Caco-2 (cell line): ENCODE measurements at regions of chr5 and their contacts with region 1.

Region 1: DNA sequence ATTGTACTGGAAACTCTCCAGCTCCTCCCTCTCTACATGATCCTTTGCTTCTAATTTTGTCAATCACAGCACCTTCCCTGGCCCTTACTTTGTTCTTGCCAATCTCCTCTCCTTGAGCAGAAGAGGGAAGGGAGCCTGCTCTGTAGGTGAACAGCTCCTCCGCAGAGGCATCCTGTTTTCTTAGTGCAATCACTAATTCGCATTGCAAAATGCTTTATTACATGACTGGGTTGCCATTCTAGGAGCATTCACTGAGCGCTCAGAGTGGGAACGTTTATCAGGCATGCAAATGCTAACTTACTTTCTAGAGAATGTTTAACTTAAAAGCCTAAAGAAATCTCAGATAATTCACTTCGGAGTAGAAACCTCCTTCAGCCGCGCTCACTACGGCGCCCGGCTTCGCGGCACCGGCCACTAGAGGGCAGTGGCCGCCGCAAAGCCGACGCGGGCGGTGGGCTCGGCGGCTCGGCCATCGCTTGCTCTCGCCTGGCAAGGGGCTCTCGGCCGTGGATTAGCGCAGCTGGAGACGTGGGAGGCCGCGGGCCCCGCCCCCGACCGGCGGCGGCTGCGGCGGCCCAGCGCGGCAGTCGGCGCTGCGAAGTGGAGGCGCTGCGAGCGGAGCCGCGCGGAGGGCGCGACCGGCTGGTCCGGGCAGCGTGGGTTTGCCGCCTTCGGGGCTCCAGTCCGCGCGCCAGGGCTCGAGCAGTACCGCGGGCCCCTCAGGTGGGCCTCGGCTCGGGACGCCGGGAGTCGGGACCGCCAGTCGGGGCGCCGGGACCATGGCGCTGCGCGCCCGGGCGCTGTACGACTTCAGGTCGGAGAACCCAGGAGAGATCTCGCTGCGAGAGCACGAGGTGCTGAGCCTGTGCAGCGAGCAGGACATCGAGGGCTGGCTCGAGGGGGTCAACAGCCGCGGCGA is at the start of gene SNX18:
- DNase-seq: peak; percentile 93 to 95
- H3K4me3 ChIP-seq: peak within 1 kb of the TSS; percentile 95
- H3K4me3 Mint-ChIP-seq: peak within 1 kb of the TSS; percentile 68
- H3K27ac Mint-ChIP-seq: no peak within 1 kb of the TSS
- H3K4me1 ChIP-seq: peaks cover 25% of the 10 kb centered on the region
- H3K4me1 Mint-ChIP-seq: no peaks in the 10 kb centered on the region
- H3K27me3 ChIP-seq: no peaks in the 10 kb centered on the region
- H3K27me3 Mint-ChIP-seq: no peaks in the 10 kb centered on the region
- CTCF ChIP-seq: peak; percentile 93 to 97
- total RNA-seq, gene SNX18: 25.0 and 28.0 TPM in 2 replicates

Region 2: GRCh38 chr5:54243473-54244080 is 273.9 kb before region 1 on chr5:
- CTCF ChIA-PET with region 1: interaction called, 9 read pairs
- POLR2A ChIA-PET with region 1: no interaction called
- intact Hi-C with region 1: loop called (anchors 10 kb)
- DNase-seq: peak in 1 of 2 experiments; percentile 62
- H3K4me3 ChIP-seq: no peak overlapping the region
- H3K4me3 Mint-ChIP-seq: no peak overlapping the region
- H3K27ac Mint-ChIP-seq: no peak overlapping the region
- H3K4me1 ChIP-seq: 0 out of 2 replicates have a peak, but pooled peaks cover 9% of the 10 kb centered on the region
- H3K4me1 Mint-ChIP-seq: peaks cover 10% of the 10 kb centered on the region
- H3K27me3 ChIP-seq: no peaks in the 10 kb centered on the region
- H3K27me3 Mint-ChIP-seq: no peaks in the 10 kb centered on the region
- CTCF ChIP-seq: peak; percentile 78 to 83

Region 3: GRCh38 chr5:54719384-54720283 is 202.2 kb after region 1 on chr5:
- CTCF ChIA-PET with region 1: no interaction called
- POLR2A ChIA-PET with region 1: no interaction called
- intact Hi-C with region 1: no loop called
- DNase-seq: no peak
- H3K4me3 ChIP-seq: no peak overlapping the region
- H3K4me3 Mint-ChIP-seq: no peak overlapping the region
- H3K27ac Mint-ChIP-seq: no peak overlapping the region
- H3K4me1 ChIP-seq: no peaks in the 10 kb centered on the region
- H3K4me1 Mint-ChIP-seq: peaks cover 2% of the 10 kb centered on the region
- H3K27me3 ChIP-seq: no peaks in the 10 kb centered on the region; the same call in 1 of the 2 replicates
- H3K27me3 Mint-ChIP-seq: peaks cover 9% of the 10 kb centered on the region
- CTCF ChIP-seq: no peak

Region 4: DNA sequence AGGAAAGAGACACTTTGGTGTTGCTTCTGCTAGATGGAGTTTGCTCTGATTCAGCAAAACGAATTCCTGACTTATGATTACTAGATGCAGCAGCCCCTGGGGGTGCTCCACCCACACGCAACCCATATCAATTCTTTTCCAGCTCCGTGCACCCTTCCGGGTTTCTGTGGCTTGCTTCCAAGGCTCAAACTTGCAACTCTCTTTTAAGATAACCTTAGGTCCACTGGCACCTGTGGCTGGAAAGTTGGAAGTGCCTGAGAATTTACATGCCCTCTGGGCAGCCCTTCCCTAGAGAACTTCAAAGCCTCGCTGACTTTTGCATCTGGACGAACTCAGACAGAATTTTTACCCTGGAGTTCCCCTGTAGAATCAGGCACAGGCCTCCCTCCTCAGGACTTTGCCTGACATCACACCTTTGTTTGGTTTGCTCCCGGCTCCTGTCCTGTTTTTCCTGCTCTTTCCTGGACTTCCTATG is 225.0 kb after region 1 on chr5:
- CTCF ChIA-PET with region 1: interaction called, 4 read pairs
- POLR2A ChIA-PET with region 1: no interaction called
- intact Hi-C with region 1: loop called (anchors 1 kb)
- DNase-seq: peak; percentile 41 to 75
- H3K4me3 ChIP-seq: no peak overlapping the region
- H3K4me3 Mint-ChIP-seq: no peak overlapping the region
- H3K27ac Mint-ChIP-seq: no peak overlapping the region
- H3K4me1 ChIP-seq: peaks cover 24% of the 10 kb centered on the region
- H3K4me1 Mint-ChIP-seq: no peaks in the 10 kb centered on the region
- H3K27me3 ChIP-seq: no peaks in the 10 kb centered on the region
- H3K27me3 Mint-ChIP-seq: peaks cover 6% of the 10 kb centered on the region
- CTCF ChIP-seq: peak in 1 of 2 experiments; percentile 15

Region 5: GRCh38 chr5:54844905-54845566 is 327.6 kb after region 1 on chr5:
- CTCF ChIA-PET with region 1: interaction called, 22 read pairs
- POLR2A ChIA-PET with region 1: no interaction called
- intact Hi-C with region 1: loop called (anchors 1 kb)
- DNase-seq: peak in 1 of 2 experiments; percentile 18
- H3K4me3 ChIP-seq: no peak overlapping the region
- H3K4me3 Mint-ChIP-seq: no peak overlapping the region
- H3K27ac Mint-ChIP-seq: no peak overlapping the region
- H3K4me1 ChIP-seq: no peaks in the 10 kb centered on the region
- H3K4me1 Mint-ChIP-seq: no peaks in the 10 kb centered on the region
- H3K27me3 ChIP-seq: no peaks in the 10 kb centered on the region
- H3K27me3 Mint-ChIP-seq: peaks cover 11% of the 10 kb centered on the region
- CTCF ChIP-seq: peak; percentile 41 to 50

Region 6: DNA sequence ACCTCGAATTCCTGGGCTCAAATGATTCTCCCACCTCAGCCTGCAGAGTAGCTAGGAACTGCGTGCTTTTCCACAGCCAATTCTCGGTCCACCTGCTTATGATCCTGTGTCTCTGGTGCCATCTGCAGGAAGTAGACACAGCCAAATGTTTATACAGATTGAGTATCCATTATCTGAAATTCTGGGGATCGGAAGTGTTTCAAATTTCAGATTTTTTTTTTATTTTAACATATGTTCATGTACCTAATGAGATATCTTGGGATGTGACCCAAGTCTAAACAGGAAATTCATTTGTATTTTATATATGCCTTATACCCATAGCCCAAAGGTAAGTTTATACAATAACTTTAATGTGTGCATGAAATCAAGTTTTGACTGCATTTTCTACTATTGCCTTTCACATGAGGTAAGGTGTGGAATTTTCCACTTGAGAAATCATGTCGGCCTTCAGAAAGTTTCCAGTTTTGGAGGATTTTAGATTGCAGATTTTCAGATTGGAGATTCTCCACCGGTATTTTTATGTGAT is 378.4 kb after region 1 on chr5:
- CTCF ChIA-PET with region 1: interaction called, 6 read pairs
- POLR2A ChIA-PET with region 1: no interaction called
- intact Hi-C with region 1: loop called (anchors 1 kb)
- DNase-seq: peak; percentile 47 to 49
- H3K4me3 ChIP-seq: no peak overlapping the region
- H3K4me3 Mint-ChIP-seq: no peak overlapping the region
- H3K27ac Mint-ChIP-seq: no peak overlapping the region
- H3K4me1 ChIP-seq: no peaks in the 10 kb centered on the region
- H3K4me1 Mint-ChIP-seq: no peaks in the 10 kb centered on the region
- H3K27me3 ChIP-seq: no peaks in the 10 kb centered on the region; the same call in 1 of the 2 replicates
- H3K27me3 Mint-ChIP-seq: peaks cover 18% of the 10 kb centered on the region
- CTCF ChIP-seq: peak; percentile 59 to 65